ENCODE measurements at regions of chr18 and their contacts with region 1.

Region 1: GRCh38 chr18:61901323-61901986 is 8.6 kb upstream of the RNF152 start:
- DNase-seq: peak; percentile 74
- H3K4me3 ChIP-seq: no peak overlapping the region
- H3K27ac ChIP-seq: no peak overlapping the region
- H3K4me1 ChIP-seq: peaks cover 4% of the 10 kb centered on the region
- H3K27me3 ChIP-seq: no peaks in the 10 kb centered on the region
- CTCF ChIP-seq: peak; percentile 91 to 95
- POLR2A ChIP-seq: no peak

Region 2: DNA sequence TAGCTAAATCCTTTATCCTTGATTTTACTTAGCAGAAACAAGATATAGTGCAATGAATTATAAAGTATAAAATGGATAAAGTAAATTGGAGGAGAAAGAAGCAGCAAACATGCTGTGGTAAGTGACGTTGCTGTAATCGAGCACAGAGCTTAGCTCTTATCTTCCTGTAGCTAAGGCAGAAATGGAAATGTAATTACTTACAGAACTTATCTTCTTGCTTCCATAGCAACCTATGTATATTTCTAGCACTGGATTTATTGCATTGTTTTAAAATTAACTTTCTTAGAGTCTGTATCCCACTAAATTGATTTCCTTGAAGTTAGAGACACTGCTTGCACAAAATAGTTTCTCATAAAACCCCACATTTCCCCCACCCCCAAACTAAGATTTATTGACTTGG is 1398.3 kb before region 1 on chr18:
- CTCF ChIA-PET with region 1: no interaction called
- POLR2A ChIA-PET with region 1: no interaction called
- dilution Hi-C with region 1: no loop called
- intact Hi-C with region 1: no loop called
- DNase-seq: no peak
- H3K4me3 ChIP-seq: no peak overlapping the region
- H3K27ac ChIP-seq: no peak overlapping the region
- H3K4me1 ChIP-seq: no peaks in the 10 kb centered on the region
- H3K27me3 ChIP-seq: no peaks in the 10 kb centered on the region
- CTCF ChIP-seq: no peak
- POLR2A ChIP-seq: no peak

Region 3: DNA sequence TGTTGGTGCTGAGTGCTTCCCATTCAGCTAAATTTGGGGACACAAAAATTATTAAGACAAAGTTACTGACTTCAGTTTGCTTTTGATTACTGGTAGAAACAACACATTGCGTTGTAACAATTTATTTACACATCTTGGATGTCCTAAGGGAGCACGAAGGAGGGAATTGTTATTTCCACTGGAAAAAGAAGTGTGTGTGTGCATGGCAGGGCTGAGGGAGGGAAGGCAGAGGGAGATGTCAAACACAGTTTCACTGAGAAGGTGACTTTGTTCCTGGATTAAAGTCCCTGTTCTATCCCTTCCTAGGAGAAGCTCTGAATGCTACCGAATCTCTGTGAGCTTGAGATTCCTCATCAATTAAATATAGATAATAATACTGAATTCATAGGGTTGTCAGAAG is 572.1 kb before region 1 on chr18:
- CTCF ChIA-PET with region 1: no interaction called
- POLR2A ChIA-PET with region 1: no interaction called
- dilution Hi-C with region 1: no loop called
- intact Hi-C with region 1: no loop called
- DNase-seq: no peak
- H3K4me3 ChIP-seq: no peak overlapping the region
- H3K27ac ChIP-seq: no peak overlapping the region
- H3K4me1 ChIP-seq: peaks cover 8% of the 10 kb centered on the region
- H3K27me3 ChIP-seq: peaks cover 3 to 5% of the 10 kb centered on the region in 2 experiments
- CTCF ChIP-seq: no peak
- POLR2A ChIP-seq: no peak

Region 4: GRCh38 chr18:61551586-61551985 is 349.9 kb before region 1 on chr18:
- CTCF ChIA-PET with region 1: interaction called, 5 read pairs
- POLR2A ChIA-PET with region 1: no interaction called
- dilution Hi-C with region 1: no loop called
- intact Hi-C with region 1: loop called (anchors 2 kb)
- DNase-seq: peak; percentile 88
- H3K4me3 ChIP-seq: no peak overlapping the region
- H3K27ac ChIP-seq: no peak overlapping the region
- H3K4me1 ChIP-seq: no peaks in the 10 kb centered on the region
- H3K27me3 ChIP-seq: no peaks in the 10 kb centered on the region
- CTCF ChIP-seq: peak; percentile 72 to 79
- POLR2A ChIP-seq: no peak

Region 5: DNA sequence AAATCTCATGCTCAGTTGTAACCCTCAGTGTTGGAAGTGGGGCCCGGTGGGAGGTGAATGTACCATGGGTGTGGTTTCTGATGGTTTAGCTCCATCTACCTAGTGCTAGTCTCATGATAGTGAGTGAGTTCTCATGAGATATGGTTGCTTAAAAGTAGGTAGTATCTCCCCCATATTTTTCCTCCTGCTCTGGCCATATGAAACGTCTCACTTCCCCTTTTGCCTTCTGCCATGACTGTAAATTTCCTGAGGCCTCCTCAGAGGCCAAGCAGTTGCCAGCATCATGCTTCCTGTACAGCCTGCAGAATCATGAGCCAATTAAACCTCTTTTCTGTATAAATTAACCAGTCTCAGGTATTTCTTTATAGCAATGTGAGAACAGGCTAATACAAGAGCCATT is 54.2 kb after region 1 on chr18:
- CTCF ChIA-PET with region 1: interaction called, 4 read pairs
- POLR2A ChIA-PET with region 1: no interaction called
- dilution Hi-C with region 1: no loop called
- intact Hi-C with region 1: loop called (anchors 5 kb)
- DNase-seq: peak; percentile 56
- H3K4me3 ChIP-seq: no peak overlapping the region
- H3K27ac ChIP-seq: no peak overlapping the region
- H3K4me1 ChIP-seq: peaks cover 16% of the 10 kb centered on the region
- H3K27me3 ChIP-seq: no peaks in the 10 kb centered on the region
- CTCF ChIP-seq: no peak
- POLR2A ChIP-seq: no peak

Measured in endothelial cell of umbilical vein (primary cell).